HEK293T (cell line): ENCODE measurements at regions of chr1 and their contacts with region 1.

Region 1: GRCh38 chr1:179002552-179003345 is 22.9 kb upstream of the FAM20B start:
- DNase-seq: peak; percentile 81

Region 2: DNA sequence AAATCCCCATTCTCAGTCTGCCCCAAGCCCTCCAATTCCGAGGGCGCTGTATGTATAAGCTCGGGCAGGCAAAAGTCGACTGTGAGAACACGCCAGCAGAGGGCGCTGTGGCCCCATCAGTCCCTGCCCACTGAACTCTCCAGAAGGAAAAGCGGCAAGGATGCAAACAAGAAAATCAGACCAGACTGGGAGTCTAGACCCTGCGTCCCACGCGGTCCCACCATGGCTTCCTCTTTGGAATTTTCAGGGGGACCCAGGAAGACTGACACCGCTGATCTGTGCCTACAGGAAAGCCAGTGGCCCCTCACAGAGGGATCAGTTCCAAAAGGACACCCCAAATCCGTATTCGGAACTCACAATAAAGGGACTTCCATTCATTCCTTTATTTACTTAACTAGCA is 470.4 kb before region 1 on chr1:
- CTCF ChIA-PET with region 1: interaction called, 13 read pairs
- POLR2A ChIA-PET with region 1: no interaction called
- DNase-seq: peak; percentile 93

Region 3: DNA sequence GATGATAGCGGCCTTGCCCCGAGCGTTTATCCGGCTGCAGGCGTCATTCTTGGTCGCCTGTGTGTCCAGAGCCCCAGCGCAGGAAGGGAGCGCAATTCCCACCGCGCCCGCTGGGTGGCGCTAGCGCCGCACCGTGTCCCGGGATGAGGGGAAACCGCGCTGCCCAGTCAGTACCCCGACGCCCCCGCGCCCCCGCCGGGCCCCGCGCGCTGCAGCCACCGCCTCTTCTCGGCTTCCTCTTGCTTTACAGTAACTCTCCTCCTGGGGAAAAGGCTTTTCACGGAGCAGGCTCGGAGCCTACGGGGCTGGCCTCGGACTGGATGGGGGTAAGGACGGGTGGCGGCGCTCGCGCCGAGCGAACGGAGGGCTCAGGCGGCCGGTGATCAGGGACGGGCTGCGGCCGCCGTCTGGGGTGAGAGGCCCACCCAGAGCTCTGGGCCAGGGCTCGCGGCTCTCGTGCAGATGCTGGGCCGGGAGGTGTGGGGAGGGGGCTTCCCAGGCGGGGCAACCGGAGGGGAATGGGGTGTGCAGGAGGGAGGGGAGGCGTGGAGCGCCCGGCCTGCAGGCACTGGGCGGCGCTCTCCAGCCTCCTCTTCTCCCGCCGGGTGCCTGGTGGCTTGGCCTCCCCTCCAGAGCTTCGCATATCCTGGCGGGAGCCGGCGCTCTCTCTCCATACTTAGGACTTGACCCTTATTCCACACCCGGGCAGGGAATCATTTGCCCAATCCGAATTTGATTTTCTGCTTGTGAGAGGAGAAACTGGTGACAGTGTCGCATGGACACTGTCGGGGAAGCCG is 460.0 kb before region 1 on chr1:
- CTCF ChIA-PET with region 1: interaction called, 14 read pairs
- POLR2A ChIA-PET with region 1: interaction called, 12 read pairs
- DNase-seq: peak; percentile 93

Region 4: GRCh38 chr1:178774263-178774662 is 228.5 kb before region 1 on chr1:
- CTCF ChIA-PET with region 1: interaction called, 36 read pairs
- POLR2A ChIA-PET with region 1: interaction called, 3 read pairs
- DNase-seq: no peak

Region 5: DNA sequence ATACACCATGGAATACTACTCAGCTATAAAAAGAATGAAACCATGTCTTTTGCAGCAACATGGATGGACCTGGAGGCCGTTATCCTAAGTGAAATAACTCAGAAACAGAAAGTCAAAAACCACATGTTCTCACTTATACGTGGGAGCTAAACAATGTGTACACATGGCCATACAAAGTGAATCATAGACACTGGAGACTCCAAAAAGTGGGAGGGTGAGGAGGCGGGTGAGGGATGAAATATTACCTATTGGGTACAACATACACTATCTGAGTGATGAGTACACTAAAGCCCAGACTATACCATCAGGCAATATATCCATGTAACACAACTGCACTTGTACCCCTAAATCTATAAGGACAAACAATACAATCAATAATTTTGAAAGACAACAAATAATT is 16.5 kb before region 1 on chr1:
- CTCF ChIA-PET with region 1: no interaction called
- POLR2A ChIA-PET with region 1: no interaction called
- DNase-seq: no peak

Region 6: GRCh38 chr1:179016747-179017549 is 14.2 kb after region 1 on chr1:
- CTCF ChIA-PET with region 1: interaction called, 10 read pairs
- POLR2A ChIA-PET with region 1: no interaction called
- DNase-seq: peak; percentile 60

Region 7: GRCh38 chr1:179441501-179441900 is 438.8 kb after region 1 on chr1:
- CTCF ChIA-PET with region 1: no interaction called
- POLR2A ChIA-PET with region 1: no interaction called
- DNase-seq: no peak